GM10248 (cell line): ENCODE measurements at regions of chr11 and their contacts with region 1.

Region 1: GRCh38 chr11:72716290-72716689 is 35.9 kb downstream of the ARAP1 start:
- DNase-seq: no peak
- CTCF ChIP-seq: no peak

Region 2: GRCh38 chr11:72541257-72541974 is 174.9 kb before region 1 on chr11:
- CTCF ChIA-PET with region 1: no interaction called
- POLR2A ChIA-PET with region 1: no interaction called
- DNase-seq: no peak
- CTCF ChIP-seq: no peak

Region 3: DNA sequence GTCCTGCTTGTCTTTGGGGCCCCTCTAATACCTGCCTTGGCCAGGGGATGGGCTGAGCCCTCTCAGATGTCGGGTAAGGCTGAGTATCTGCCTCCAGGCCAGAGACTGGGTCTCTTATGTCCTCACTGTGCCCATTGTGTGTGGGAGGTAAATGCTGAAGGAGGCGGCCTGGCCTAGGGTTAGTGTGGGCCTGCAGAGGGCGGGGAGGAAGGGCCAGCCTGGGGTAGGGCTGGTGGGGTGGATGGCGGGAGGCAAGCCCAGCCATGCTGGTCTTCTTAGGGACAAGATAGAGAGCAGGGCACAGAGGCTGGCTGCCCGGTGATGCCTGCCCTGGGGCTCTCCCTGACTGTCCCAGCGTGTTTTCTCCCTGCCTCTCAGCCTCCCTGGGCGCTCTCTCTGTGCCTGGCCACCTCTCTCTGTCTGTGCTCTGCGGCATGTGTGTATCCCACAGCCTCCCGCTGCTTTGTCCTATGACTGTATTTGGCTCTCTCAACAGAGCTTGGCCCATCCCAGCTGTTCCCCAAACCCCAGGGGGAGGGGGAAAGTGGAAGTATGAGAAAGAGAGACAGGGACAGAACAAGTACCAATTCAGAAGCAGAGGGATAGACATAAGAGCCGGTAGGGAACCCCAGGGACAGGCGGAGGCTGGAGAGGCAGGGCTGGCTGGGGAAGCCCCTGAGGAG is 99.1 kb before region 1 on chr11:
- CTCF ChIA-PET with region 1: no interaction called
- POLR2A ChIA-PET with region 1: no interaction called
- DNase-seq: no peak
- CTCF ChIP-seq: no peak

Region 4: DNA sequence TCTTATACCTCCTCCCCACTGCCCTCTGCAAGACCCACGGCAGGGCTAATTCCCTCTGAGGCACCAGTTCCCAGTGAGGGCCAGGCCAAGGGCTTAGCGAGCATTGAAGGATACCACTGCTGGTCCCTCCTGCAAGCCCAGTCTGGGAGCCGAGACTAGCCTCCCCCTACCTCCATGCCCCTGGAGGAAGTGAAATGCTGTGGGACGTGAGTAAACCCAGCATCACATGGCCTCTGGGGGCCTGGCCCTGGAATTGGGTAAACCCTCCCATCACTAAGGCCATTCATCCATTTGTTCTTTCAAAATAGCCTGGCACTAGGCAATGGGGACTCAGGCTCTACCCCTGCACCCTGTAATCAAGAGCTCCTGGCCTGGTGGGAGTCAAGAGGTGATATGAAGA is 11.2 kb after region 1 on chr11:
- CTCF ChIA-PET with region 1: interaction called, 16 read pairs
- POLR2A ChIA-PET with region 1: no interaction called
- DNase-seq: no peak
- CTCF ChIP-seq: no peak